AG04450 (cell line): ENCODE measurements at regions of chr12 and their contacts with region 1.

Region 1: DNA sequence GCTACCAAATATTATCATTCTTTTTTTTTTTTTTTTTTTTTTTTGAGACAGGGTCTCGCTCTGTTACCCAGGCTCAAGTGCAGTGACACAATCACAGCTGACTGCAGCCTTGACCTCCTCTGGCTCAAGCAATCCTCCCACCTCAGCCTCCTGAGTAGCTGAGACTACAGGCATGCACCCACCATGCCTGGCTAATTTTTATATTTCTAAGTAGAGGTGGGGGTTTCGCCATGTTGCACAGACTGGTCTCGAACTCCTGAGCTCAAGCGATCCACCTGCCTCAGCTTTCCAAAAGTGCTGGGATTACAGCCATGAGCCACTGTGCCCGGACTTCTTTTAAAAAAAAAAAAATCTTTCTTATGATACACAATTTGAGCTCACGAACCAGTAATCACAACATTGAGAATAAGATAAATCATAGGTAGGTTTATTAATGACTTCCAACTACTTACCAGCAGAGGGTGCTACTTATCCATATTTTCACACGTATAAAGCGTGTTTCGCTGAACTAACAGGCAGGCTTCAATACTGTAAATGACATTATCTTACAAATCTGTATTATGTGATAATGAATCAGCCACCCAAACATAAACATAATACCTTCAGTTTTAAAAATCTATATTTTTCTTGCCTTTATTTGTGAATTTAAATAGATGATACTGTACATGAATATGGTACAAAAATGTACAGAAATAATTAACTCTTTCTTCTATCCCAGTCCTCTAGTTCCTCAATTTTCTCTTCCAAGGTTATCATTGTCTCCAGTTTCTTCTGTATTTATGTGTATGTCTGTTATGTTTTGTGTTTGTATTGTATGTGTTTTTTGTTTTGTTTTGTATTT is 42.5 kb upstream of the BCAT1 start:
- DNase-seq: peak; percentile 33
- H3K4me3 ChIP-seq: no peak overlapping the region
- H3K27ac ChIP-seq: no peak overlapping the region
- H3K27me3 ChIP-seq: no peaks in the 10 kb centered on the region
- CTCF ChIP-seq: peak; percentile 54

Region 2: GRCh38 chr12:24845615-24846014 is 145.8 kb before region 1 on chr12:
- CTCF ChIA-PET with region 1: no interaction called
- POLR2A ChIA-PET with region 1: no interaction called
- DNase-seq: no peak
- H3K4me3 ChIP-seq: no peak overlapping the region
- H3K27ac ChIP-seq: no peak overlapping the region
- H3K27me3 ChIP-seq: no peaks in the 10 kb centered on the region
- CTCF ChIP-seq: no peak

Region 3: DNA sequence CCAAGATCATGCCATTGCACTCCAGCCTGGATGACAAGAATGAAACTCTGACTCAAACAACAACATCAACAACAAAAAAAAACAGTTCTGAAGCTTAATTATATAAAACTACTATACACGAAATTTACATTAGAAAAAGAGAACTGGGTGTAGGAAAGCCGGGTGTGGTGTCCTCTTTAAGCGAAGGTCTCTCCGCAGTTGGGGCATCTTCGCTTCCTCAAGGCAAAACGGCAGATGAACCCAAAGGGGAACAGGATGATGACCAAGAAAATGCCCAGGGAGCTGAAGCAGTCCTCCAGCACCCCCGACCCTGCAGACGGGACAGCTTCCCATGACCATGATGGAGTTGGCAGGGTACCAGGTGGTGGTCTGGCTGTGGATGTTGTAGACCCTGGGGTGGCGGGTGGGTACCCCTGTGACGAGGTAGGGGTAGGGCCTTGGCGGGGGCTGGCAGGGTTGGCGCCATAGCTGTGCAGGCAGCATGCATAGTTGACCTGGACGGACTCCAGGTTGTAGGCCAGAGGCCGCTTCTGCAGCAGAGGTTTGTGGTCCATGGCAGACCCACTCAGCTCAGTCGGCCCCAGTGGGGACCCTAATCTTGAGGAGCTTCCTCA is 24.4 kb before region 1 on chr12:
- CTCF ChIA-PET with region 1: interaction called, 11 read pairs
- POLR2A ChIA-PET with region 1: no interaction called
- DNase-seq: no peak
- H3K4me3 ChIP-seq: no peak overlapping the region
- H3K27ac ChIP-seq: no peak overlapping the region
- H3K27me3 ChIP-seq: no peaks in the 10 kb centered on the region
- CTCF ChIP-seq: no peak

Region 4: DNA sequence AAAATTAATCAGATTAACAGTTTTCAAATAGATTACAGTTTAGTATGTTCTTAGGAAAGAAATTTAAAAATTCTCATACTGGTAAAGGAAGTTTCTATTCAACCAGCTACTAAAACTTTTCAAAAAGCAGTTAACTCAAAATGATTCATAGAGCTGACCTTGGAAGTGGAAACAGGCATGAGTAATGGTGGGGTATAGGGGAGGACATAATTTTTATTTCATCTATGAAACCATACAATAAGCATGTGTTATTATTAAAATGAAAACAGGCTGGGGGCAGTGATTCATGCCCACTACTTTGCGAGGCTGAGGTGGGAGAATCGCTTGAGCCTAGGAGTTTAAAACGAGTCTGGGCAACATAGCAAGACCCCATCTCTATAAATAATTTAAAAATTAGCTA is 130.5 kb after region 1 on chr12:
- CTCF ChIA-PET with region 1: interaction called, 131 read pairs
- POLR2A ChIA-PET with region 1: interaction called, 6 read pairs
- DNase-seq: no peak
- H3K4me3 ChIP-seq: no peak overlapping the region
- H3K27ac ChIP-seq: no peak overlapping the region
- H3K27me3 ChIP-seq: no peaks in the 10 kb centered on the region
- CTCF ChIP-seq: no peak

Region 5: GRCh38 chr12:25130741-25131188 is 139.3 kb after region 1 on chr12:
- CTCF ChIA-PET with region 1: interaction called, 131 read pairs
- POLR2A ChIA-PET with region 1: no interaction called
- DNase-seq: peak; percentile 16
- H3K4me3 ChIP-seq: no peak overlapping the region
- H3K27ac ChIP-seq: no peak overlapping the region
- H3K27me3 ChIP-seq: no peaks in the 10 kb centered on the region
- CTCF ChIP-seq: peak; percentile 61

Region 6: DNA sequence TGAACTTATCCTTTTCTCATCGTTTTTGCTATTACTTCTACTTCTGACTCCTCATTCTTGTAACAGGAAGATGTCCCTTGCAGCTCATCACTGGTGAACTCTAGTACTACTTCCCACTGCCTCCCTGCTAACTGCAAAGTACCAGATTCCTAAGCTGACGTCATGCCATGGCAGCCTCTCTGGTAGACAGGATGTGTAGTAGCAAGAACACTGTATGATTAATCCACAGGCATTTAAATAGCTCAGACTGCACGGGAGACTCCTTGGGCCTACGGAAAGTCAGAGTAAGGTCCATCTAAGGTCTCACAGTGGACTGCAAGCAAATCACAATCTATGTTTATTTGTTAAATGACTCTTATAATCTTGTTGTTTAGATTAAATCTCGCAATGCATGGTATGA is 160.0 kb after region 1 on chr12:
- CTCF ChIA-PET with region 1: interaction called, 76 read pairs
- POLR2A ChIA-PET with region 1: no interaction called
- DNase-seq: peak; percentile 98
- H3K4me3 ChIP-seq: no peak overlapping the region
- H3K27ac ChIP-seq: peak overlapping the region; percentile 77
- H3K27me3 ChIP-seq: no peaks in the 10 kb centered on the region
- CTCF ChIP-seq: no peak